ENCODE measurements at regions of chr19 and their contacts with region 1.

Region 1: DNA sequence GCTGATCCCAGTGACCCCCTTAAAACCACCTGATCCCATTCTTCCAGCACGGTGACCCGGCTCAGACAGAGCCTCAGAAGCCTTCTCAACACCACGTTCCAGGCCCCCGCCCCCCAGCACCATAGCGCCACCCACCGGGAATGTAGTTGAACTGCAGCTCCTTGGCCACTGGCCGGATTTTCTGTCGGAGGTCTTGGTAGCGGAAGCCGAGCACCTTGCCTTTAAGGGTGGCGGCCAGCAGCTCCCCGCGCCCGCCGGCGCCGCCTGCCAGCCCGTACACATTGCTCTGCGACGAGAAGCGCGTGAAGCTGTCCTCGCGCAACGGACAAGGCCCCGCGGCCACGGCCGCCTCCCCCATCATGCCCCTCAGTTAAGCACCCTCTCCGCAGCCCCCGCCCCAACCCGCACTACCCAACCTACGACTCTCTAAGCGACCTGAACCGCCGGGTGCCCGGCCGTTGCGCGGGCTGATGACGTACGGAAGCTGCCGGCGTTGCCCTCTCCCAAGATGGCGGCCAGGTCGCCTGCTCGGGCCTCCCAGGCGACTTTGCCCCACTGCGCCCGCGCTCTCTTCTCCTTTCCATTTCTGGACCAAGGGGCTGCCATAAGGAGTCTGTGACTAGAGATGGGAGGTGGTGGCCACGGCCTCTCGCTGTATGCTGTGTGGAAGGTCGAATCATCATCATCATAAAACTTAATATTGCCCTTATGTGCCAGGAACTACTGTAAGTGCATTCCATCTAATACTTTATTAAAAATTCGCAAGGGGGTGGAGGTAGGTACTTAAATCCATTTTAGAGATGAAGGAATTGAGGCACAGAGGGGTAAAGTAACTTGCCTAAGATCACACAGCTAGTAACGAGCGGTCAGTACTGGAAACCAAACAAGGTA is at the start of gene KPTN:
- DNase-seq: peak; percentile 78 to 94 (median 83)
- ATAC-seq: peak; percentile 83
- H3K4me3 ChIP-seq: peak within 1 kb of the TSS; percentile 82
- H3K4me3 Mint-ChIP-seq: peak within 1 kb of the TSS; percentile 97
- H3K27ac ChIP-seq: peak within 1 kb of the TSS; percentile 73 to 94
- H3K27ac Mint-ChIP-seq: peak within 1 kb of the TSS; percentile 96
- H3K4me1 ChIP-seq: peaks cover 33% of the 10 kb centered on the region
- H3K4me1 Mint-ChIP-seq: peaks cover 37% of the 10 kb centered on the region
- H3K27me3 ChIP-seq: no peaks in the 10 kb centered on the region
- H3K27me3 Mint-ChIP-seq: no peaks in the 10 kb centered on the region
- CTCF ChIP-seq: peak; percentile 75
- total RNA-seq, gene KPTN: 3.6 to 4.5 TPM

Region 2: GRCh38 chr19:46586303-46587001 is 897.6 kb before region 1 on chr19:
- CTCF ChIA-PET with region 1: no interaction called
- POLR2A ChIA-PET with region 1: no interaction called
- intact Hi-C with region 1: loop called in 1 of 2 experiments (anchors 5 kb)
- DNase-seq: no peak
- ATAC-seq: no peak
- H3K4me3 ChIP-seq: no peak overlapping the region
- H3K4me3 Mint-ChIP-seq: no peak overlapping the region
- H3K27ac ChIP-seq: no peak overlapping the region
- H3K27ac Mint-ChIP-seq: no peak overlapping the region
- H3K4me1 ChIP-seq: no peaks in the 10 kb centered on the region
- H3K4me1 Mint-ChIP-seq: peaks cover 8% of the 10 kb centered on the region
- H3K27me3 ChIP-seq: no peaks in the 10 kb centered on the region
- H3K27me3 Mint-ChIP-seq: no peaks in the 10 kb centered on the region
- CTCF ChIP-seq: no peak

Region 3: DNA sequence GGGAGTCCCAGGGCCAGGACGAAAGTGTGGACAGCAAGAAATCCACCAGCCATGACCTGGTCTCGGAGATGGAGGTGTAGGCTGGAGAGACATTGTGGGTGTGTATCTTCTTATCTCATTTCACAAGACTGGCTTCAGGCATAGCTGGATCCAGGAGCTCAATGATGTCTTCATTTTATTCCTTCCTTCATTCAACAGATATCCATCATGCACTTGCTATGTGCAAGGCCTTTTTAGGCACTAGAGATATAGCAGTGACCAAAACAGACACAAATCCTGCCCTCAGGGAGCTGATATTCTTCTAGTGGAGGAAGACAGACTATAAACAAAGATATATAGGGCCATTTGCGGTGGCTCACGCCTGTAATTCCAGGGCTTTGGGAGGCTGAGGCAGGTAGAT is 142.3 kb before region 1 on chr19:
- CTCF ChIA-PET with region 1: no interaction called
- POLR2A ChIA-PET with region 1: no interaction called
- intact Hi-C with region 1: no loop called
- DNase-seq: no peak
- ATAC-seq: no peak
- H3K4me3 ChIP-seq: no peak overlapping the region
- H3K4me3 Mint-ChIP-seq: no peak overlapping the region
- H3K27ac ChIP-seq: no peak overlapping the region
- H3K27ac Mint-ChIP-seq: no peak overlapping the region
- H3K4me1 ChIP-seq: peaks cover 5% of the 10 kb centered on the region
- H3K4me1 Mint-ChIP-seq: peaks cover 2% of the 10 kb centered on the region
- H3K27me3 ChIP-seq: no peaks in the 10 kb centered on the region
- H3K27me3 Mint-ChIP-seq: no peaks in the 10 kb centered on the region
- CTCF ChIP-seq: no peak

Region 4: GRCh38 chr19:47469719-47470118 is 14.3 kb before region 1 on chr19:
- CTCF ChIA-PET with region 1: interaction called, 4 read pairs
- POLR2A ChIA-PET with region 1: no interaction called
- intact Hi-C with region 1: loop called in 1 of 2 experiments (anchors 2 kb)
- DNase-seq: no peak
- ATAC-seq: no peak
- H3K4me3 ChIP-seq: no peak overlapping the region
- H3K4me3 Mint-ChIP-seq: no peak overlapping the region
- H3K27ac ChIP-seq: no peak overlapping the region
- H3K27ac Mint-ChIP-seq: no peak overlapping the region
- H3K4me1 ChIP-seq: peaks cover 13% of the 10 kb centered on the region
- H3K4me1 Mint-ChIP-seq: peaks cover 17% of the 10 kb centered on the region
- H3K27me3 ChIP-seq: peaks cover 54 to 58% of the 10 kb centered on the region in 2 experiments
- H3K27me3 Mint-ChIP-seq: peaks cover 74% of the 10 kb centered on the region
- CTCF ChIP-seq: no peak

Region 5: DNA sequence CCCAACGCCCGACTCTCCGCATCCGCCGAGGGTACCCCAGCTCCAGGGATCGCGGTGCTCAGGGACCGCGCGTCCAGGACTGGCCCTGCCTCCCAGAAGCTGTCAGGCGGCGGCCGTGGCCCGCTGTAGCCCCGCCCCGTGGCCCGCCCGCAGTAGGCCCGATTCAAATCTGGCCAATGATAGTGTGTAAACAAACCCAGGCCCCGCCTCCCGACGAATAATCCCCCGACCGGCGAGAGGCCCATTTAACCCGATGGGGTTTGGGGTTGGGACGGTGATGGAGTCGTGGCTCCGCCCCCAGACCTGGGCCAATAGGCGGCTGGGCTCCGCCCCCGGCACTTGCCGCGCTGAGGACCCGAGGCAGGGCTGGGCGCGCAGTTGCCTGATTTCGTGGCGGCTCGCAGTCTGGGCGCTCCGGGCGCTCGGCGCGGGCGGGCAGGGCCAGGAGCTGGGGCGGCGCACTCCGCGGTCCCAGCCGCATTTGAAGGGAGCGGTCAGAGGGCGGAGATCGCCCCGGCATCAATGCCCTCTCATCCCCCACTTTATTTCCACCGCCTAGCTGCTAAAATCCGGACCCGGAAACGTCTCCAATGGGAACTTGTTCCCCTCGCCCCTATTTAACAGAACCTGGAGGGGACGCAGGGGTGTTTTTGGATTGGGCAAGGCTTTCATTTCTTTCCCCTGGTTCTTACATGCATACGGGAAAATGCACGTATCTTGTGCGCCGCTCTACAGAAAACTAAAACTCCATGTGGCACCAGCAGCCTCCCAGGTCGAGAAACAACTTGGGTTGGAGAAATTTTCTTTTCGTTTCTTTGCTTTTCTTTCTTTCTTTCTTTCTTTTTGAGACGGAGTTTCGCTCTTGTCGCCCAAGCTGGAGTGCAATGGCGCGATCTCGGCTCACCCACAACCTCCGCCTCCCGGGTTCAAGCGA is 116.5 kb after region 1 on chr19:
- CTCF ChIA-PET with region 1: interaction called, 4 read pairs
- POLR2A ChIA-PET with region 1: interaction called, 12 read pairs
- intact Hi-C with region 1: no loop called
- DNase-seq: peak; percentile 98 to 100 (median 100)
- ATAC-seq: peak; percentile 97
- H3K4me3 ChIP-seq: peak overlapping the region; percentile 80
- H3K4me3 Mint-ChIP-seq: peak overlapping the region; percentile 86
- H3K27ac ChIP-seq: peak overlapping the region; percentile 55 to 79
- H3K27ac Mint-ChIP-seq: peak overlapping the region; percentile 89
- H3K4me1 ChIP-seq: peaks cover 24% of the 10 kb centered on the region
- H3K4me1 Mint-ChIP-seq: peaks cover 20% of the 10 kb centered on the region
- H3K27me3 ChIP-seq: no peaks in the 10 kb centered on the region
- H3K27me3 Mint-ChIP-seq: no peaks in the 10 kb centered on the region
- CTCF ChIP-seq: no peak

Region 6: DNA sequence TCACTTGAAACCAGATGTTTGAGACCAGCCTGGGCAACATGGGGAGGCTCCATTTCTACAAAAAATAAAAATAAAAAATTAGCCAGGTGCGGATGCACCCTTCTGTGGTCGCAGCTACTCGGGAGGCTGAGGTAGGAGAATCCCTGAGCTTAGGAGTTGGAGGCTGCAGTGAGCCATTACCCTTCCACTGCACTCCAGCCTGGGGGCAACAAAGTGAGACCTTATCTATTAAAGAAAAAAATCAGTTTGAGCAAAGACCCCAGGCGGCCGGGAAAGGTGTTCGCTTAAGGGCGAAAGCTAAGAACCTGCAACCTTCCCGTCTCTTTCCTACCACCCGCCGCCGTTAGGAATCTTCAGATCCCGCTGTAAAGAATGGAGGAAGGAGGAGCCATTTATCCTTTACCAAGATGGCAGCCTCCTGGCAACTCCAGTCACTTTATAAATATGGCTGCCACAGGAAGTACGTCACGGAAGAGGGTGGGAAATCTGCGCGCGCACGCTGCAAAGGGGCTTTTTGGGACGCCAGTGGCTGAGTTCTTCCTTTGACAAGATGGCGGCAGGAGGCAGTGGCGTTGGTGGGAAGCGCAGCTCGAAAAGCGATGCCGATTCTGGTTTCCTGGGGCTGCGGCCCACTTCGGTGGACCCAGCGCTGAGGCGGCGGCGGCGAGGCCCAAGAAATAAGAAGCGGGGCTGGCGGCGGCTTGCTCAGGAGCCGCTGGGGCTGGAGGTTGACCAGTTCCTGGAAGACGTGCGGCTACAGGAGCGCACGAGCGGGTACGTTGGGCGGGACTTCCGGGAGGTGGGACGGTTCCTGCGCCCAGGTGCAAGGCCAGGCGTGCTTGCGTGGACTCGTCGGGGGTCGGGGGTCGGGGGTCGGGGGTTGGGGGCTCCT is 261.2 kb after region 1 on chr19 and contains the start of gene NOP53:
- CTCF ChIA-PET with region 1: no interaction called
- POLR2A ChIA-PET with region 1: interaction called, 6 read pairs
- intact Hi-C with region 1: loop called in 1 of 2 experiments (anchors 1 kb)
- DNase-seq: peak; percentile 94 to 99 (median 97)
- ATAC-seq: peak; percentile 80
- H3K4me3 ChIP-seq: peak within 1 kb of the TSS; percentile 59
- H3K4me3 Mint-ChIP-seq: peak within 1 kb of the TSS; percentile 98
- H3K27ac ChIP-seq: peak within 1 kb of the TSS; percentile 93 to 98
- H3K27ac Mint-ChIP-seq: peak within 1 kb of the TSS; percentile 94
- H3K4me1 ChIP-seq: peaks cover 66% of the 10 kb centered on the region
- H3K4me1 Mint-ChIP-seq: peaks cover 39% of the 10 kb centered on the region
- H3K27me3 ChIP-seq: no peaks in the 10 kb centered on the region
- H3K27me3 Mint-ChIP-seq: no peaks in the 10 kb centered on the region
- CTCF ChIP-seq: no peak
- total RNA-seq, gene NOP53: 1,074 to 1,154 TPM

Measured in CD4-positive, alpha-beta T cell (primary cell).